ENCODE measurements at regions of chr9 and their contacts with region 1.

Region 1: GRCh38 chr9:11086561-11086960 is 473.8 kb upstream of the PTPRD start:
- DNase-seq: no peak
- H3K4me3 ChIP-seq: no peak overlapping the region
- H3K27ac ChIP-seq: no peak overlapping the region
- H3K4me1 ChIP-seq: no peaks in the 10 kb centered on the region
- H3K27me3 ChIP-seq: no peaks in the 10 kb centered on the region
- CTCF ChIP-seq: no peak

Region 2: DNA sequence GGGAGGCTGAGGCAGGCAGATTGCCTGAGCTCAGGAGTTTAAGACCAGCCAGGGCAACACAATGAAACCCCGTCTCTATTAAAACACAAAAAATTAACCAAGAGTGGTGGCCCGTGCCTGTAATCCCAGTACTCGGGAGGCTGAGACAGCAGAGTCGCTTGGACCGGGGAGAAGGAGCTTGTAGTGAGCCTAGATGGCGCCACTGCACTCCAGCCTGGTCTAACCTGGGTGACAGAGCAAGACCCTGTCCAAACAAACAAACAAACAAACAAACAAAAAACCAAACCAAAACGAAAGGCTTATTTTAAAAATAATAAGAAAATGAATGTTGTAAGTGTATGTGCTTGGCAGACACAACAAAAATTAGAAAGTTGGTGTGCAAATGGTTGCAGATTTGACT is 62.5 kb after region 1 on chr9:
- intact Hi-C with region 1: loop called (anchors 10 kb)
- DNase-seq: no peak
- H3K4me3 ChIP-seq: no peak overlapping the region
- H3K27ac ChIP-seq: no peak overlapping the region
- H3K4me1 ChIP-seq: no peaks in the 10 kb centered on the region
- H3K27me3 ChIP-seq: no peaks in the 10 kb centered on the region
- CTCF ChIP-seq: no peak